AG04450 (cell line): ENCODE measurements at regions of chr10 and their contacts with region 1.

Region 1: GRCh38 chr10:97792141-97792721 is 20.4 kb upstream of the SFRP5 start:
- DNase-seq: peak; percentile 3
- H3K4me3 ChIP-seq: no peak overlapping the region
- H3K27ac ChIP-seq: no peak overlapping the region
- H3K27me3 ChIP-seq: peaks cover 13% of the 10 kb centered on the region
- CTCF ChIP-seq: peak; percentile 88

Region 2: GRCh38 chr10:97566339-97566996 is 225.8 kb before region 1 on chr10:
- CTCF ChIA-PET with region 1: no interaction called
- POLR2A ChIA-PET with region 1: no interaction called
- DNase-seq: no peak
- H3K4me3 ChIP-seq: no peak overlapping the region
- H3K27ac ChIP-seq: no peak overlapping the region
- H3K27me3 ChIP-seq: no peaks in the 10 kb centered on the region
- CTCF ChIP-seq: no peak

Region 3: GRCh38 chr10:97780841-97781617 is 11.2 kb before region 1 on chr10:
- CTCF ChIA-PET with region 1: interaction called, 27 read pairs
- POLR2A ChIA-PET with region 1: no interaction called
- DNase-seq: no peak
- H3K4me3 ChIP-seq: no peak overlapping the region
- H3K27ac ChIP-seq: no peak overlapping the region
- H3K27me3 ChIP-seq: peaks cover 25% of the 10 kb centered on the region
- CTCF ChIP-seq: no peak

Region 4: GRCh38 chr10:97869091-97870042 is 77.1 kb after region 1 on chr10:
- CTCF ChIA-PET with region 1: interaction called, 30 read pairs
- POLR2A ChIA-PET with region 1: no interaction called
- DNase-seq: peak; percentile 26
- H3K4me3 ChIP-seq: no peak overlapping the region
- H3K27ac ChIP-seq: no peak overlapping the region
- H3K27me3 ChIP-seq: peaks cover 20% of the 10 kb centered on the region
- CTCF ChIP-seq: peak; percentile 53